Psoas muscle (tissue), 8 donors: ENCODE measurements at regions of chr14 and their contacts with region 1.

Region 1: DNA sequence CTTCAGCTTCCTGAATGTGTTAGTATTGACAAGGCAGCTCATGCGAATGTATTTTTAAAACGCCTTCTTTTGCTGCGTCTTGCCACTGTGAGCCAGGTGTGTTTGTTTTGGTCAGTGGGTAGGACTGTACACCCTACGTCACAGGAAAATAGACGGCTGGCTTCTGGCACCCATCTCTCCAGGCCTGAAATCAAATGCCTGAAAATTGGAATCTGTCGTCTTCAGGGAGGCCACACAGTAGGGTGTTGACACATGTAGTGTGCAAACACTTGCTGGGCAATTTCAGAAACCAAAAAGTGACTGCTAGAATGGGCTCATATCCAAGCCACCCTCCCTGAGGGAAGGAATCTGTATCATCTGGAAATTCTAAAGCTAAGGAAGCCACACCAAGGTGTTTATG is 209.3 kb downstream of the TTC8 start:
- DNase-seq: no peak
- ATAC-seq: no peak
- H3K4me3 ChIP-seq: no peak overlapping the region
- H3K27ac ChIP-seq: no peak overlapping the region
- H3K4me1 ChIP-seq: no peaks in the 10 kb centered on the region
- H3K27me3 ChIP-seq: peaks cover 0 to 19% (median 0%) of the 10 kb centered on the region in 3 donors
- CTCF ChIP-seq: no peak

Region 2: GRCh38 chr14:89165189-89166181 is 131.7 kb after region 1 on chr14:
- intact Hi-C with region 1: loop called in 1 of 2 experiments (anchors 5 kb)
- DNase-seq: no peak
- ATAC-seq: peak; percentile 49 to 70 (median 58)
- H3K4me3 ChIP-seq: peak overlapping the region; percentile 52
- H3K27ac ChIP-seq: peak overlapping the region; percentile 64
- H3K4me1 ChIP-seq: peaks cover 30% of the 10 kb centered on the region
- H3K27me3 ChIP-seq: no peaks in the 10 kb centered on the region
- CTCF ChIP-seq: no peak

Region 3: GRCh38 chr14:89767861-89768268 is 734.1 kb after region 1 on chr14:
- intact Hi-C with region 1: loop called in 1 of 2 experiments (anchors 10 kb)
- DNase-seq: no peak
- ATAC-seq: no peak
- H3K4me3 ChIP-seq: no peak overlapping the region
- H3K27ac ChIP-seq: no peak overlapping the region
- H3K4me1 ChIP-seq: no peaks in the 10 kb centered on the region
- H3K27me3 ChIP-seq: no peaks in the 10 kb centered on the region
- CTCF ChIP-seq: peak; percentile 28